Posterior cingulate gyrus (tissue), 11 donors: ENCODE measurements at regions of chr6 and their contacts with region 1.

Region 1: DNA sequence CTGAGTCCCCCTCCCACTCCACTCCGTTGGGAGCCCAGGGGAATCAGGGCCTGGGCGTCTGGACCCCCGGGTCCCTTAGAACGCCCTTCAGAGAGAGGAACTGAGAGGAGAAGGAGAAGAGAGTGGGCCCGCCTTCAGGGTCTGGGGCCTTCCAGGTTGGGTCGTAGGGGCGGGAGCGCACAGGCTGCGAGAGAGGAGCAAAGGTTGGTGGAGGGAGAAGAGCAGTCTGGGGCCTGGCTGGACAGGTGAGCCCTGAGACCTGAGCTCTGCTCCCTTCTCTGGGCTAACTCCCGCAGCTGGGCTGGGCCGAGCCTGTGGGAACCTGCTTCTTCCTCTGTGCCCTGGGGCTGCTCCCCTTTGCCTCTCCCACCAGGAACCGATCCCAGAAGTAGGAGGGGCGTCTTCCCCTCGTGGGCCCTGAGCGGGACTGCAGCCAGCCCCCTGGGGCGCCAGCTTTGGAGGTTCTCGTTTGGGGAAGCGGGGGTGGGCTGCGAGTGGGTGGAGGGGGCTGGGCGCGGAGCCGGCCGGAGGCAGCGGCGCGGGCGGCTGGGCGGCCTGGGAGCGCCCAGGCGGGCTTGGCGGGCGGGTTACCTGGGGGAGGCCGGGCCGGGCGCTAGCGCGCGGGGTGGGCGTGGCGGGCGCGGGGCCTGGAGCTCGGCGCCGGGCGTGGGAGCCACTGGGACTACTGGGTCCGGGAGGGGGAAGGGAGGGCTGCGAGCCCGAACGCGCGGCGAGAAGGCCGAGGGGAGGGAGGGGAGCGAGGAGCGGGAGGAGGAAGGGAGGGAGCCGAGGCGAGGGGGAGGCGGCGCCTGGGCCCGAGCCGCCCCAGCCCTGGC is at the start of gene DDR1:
- DNase-seq: peak in 8 of 10 donors; percentile 70 to 97 (median 82)

Region 2: GRCh38 chr6:30672445-30673253 is 211.3 kb before region 1 on chr6 and contains the start of gene DHX16:
- intact Hi-C with region 1: loop called (anchors 10 kb)
- DNase-seq: peak; percentile 81 to 97 (median 88)

Region 3: DNA sequence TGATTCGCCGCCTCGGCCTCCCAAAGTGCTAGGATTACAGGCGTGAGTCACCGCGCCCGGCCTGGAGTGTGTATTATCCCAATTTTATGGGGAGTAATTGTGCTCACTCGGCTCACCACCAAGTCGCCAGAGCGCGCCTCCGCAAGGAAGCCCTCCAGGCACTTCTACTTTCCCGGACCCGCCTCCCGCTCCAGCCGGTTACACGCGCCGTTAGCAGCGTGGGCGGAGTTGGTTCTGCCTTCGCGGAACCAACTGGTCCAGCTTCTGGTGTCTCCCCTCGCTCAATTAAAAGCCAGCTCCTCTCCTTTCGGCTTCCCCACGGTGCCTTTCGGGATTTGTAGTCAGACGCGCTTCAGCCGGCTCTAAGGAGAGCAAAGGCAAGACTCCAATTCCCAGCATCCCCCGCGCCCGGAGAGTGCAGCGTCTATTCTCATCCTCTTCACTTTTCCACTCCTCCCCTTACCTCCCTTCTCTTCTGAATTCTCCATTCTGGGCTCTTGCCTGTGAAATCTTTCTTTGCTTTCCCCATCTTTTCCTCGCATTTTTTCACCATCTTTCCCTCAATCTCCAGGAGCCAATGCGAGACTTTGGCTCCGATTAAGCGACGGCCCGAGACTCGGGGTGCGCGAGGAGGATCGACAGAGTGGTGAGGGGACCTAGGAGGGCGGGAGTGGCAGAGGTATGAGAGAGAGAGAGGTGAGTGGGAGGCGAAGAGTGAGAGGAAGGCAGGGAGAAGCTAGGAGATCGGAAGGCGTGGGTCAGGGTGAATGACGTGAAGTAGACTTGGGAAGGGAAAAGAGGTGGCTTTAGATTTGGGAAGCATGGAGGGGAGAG is 24.1 kb after region 1 on chr6 and contains the start of gene GTF2H4:
- intact Hi-C with region 1: loop called (anchors 2 kb)
- DNase-seq: peak; percentile 95 to 99 (median 98)

Region 4: DNA sequence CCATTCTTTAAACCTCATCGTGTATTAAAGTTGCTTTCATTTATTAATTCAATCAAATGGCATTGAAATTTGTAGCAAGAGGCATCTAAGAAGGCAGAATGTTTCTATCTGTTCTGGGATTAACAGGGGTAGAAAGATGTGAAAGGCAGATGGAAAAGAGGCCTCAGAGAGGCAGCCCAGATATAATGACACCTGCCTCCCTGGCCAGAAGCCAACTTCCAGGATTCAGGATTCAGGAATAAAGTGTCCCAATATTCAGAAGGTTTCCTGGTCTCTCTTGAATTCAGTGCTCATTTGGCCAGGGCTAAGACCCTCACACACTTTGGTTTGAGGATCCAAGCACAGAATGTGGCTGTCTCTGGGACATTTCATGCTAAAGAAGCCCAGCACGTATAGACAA is 433.1 kb after region 1 on chr6:
- intact Hi-C with region 1: no loop called
- DNase-seq: no peak